Activated T-helper 1 cell treated with anti-CD3 and anti-CD28 coated beads, Interleukin-12 subunit alpha, Interleukin-12 subunit beta, Interleukin-2, Interleukin-4 antibody, amounts not matched to agents 30 ng/mL and 10 ng/mL and 1 ng/mL, durations not matched to agents 14 hours and 24 hours and 36 hours (primary cell): ENCODE measurements at regions of chr13 and their contacts with region 1.

Region 1: GRCh38 chr13:75326173-75327134 is 155.5 kb downstream of the TBC1D4 start:
- DNase-seq: peak; percentile 46
- H3K4me3 Mint-ChIP-seq: peak overlapping the region; percentile 83
- H3K27ac Mint-ChIP-seq: peak overlapping the region; percentile 96
- H3K4me1 Mint-ChIP-seq: peaks cover 48% of the 10 kb centered on the region
- H3K27me3 Mint-ChIP-seq: no peaks in the 10 kb centered on the region

Region 2: GRCh38 chr13:74243637-74244526 is 1082.6 kb before region 1 on chr13:
- intact Hi-C with region 1: loop called (anchors 5 kb)
- DNase-seq: no peak
- H3K4me3 Mint-ChIP-seq: peak overlapping the region; percentile 60
- H3K27ac Mint-ChIP-seq: peak overlapping the region; percentile 82
- H3K4me1 Mint-ChIP-seq: peaks cover 32% of the 10 kb centered on the region
- H3K27me3 Mint-ChIP-seq: peaks cover 2% of the 10 kb centered on the region

Region 3: DNA sequence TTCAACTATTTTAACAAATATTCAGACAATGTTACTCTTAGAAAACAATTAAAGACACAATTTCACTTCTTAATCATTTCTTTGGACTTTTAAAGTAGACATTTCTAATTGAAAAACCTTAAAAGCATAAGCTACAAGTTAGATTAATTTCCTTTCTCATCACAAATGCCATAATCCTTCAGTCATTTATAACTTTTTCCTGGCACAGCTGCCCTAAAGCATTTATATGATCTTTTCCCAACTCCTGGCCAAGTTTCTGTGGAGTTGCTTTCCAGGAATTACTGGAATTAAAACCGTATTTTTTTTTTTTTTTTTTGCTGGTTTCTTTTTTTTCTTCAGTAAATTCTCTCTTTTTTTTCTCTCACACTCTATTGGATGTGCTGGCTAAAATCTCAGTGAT is 460.4 kb before region 1 on chr13:
- intact Hi-C with region 1: no loop called
- DNase-seq: no peak
- H3K4me3 Mint-ChIP-seq: no peak overlapping the region
- H3K27ac Mint-ChIP-seq: no peak overlapping the region
- H3K4me1 Mint-ChIP-seq: no peaks in the 10 kb centered on the region
- H3K27me3 Mint-ChIP-seq: no peaks in the 10 kb centered on the region

Region 4: GRCh38 chr13:75299913-75300862 is 26.3 kb before region 1 on chr13:
- intact Hi-C with region 1: loop called (anchors 1 kb)
- DNase-seq: no peak
- H3K4me3 Mint-ChIP-seq: peak overlapping the region; percentile 47
- H3K27ac Mint-ChIP-seq: peak overlapping the region; percentile 79
- H3K4me1 Mint-ChIP-seq: peaks cover 47% of the 10 kb centered on the region
- H3K27me3 Mint-ChIP-seq: no peaks in the 10 kb centered on the region

Region 5: DNA sequence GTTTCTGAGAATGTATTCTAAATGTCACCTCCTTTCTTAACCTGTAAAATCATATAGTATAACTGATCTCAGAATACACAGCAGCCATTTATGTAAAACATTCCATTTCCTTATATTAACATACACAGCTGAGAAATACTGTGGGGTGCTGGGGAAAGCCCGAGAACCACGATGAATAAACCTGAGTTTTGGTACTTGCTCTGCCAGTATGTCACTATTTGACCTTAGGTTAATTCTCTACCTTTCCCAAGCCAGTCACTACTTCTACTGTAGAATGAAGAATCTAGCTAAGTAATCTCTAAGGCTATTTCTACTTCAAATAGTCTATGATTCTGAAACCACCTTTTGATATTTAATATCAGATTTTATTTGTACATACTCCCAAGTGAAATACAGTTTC is 18.2 kb before region 1 on chr13:
- intact Hi-C with region 1: loop called (anchors 1 kb)
- DNase-seq: no peak
- H3K4me3 Mint-ChIP-seq: peak overlapping the region; percentile 19
- H3K27ac Mint-ChIP-seq: peak overlapping the region; percentile 69
- H3K4me1 Mint-ChIP-seq: peaks cover 63% of the 10 kb centered on the region
- H3K27me3 Mint-ChIP-seq: no peaks in the 10 kb centered on the region

Region 6: GRCh38 chr13:75437582-75438318 is 111.3 kb after region 1 on chr13:
- intact Hi-C with region 1: no loop called
- DNase-seq: no peak
- H3K4me3 Mint-ChIP-seq: no peak overlapping the region
- H3K27ac Mint-ChIP-seq: no peak overlapping the region
- H3K4me1 Mint-ChIP-seq: no peaks in the 10 kb centered on the region
- H3K27me3 Mint-ChIP-seq: peaks cover 6% of the 10 kb centered on the region

Region 7: GRCh38 chr13:75482070-75482819 is 155.8 kb after region 1 on chr13 and contains the start of gene TBC1D4:
- intact Hi-C with region 1: loop called (anchors 2 kb)
- DNase-seq: peak; percentile 40
- H3K4me3 Mint-ChIP-seq: peak within 1 kb of the TSS; percentile 99
- H3K27ac Mint-ChIP-seq: peak within 1 kb of the TSS; percentile 89
- H3K4me1 Mint-ChIP-seq: peaks cover 45% of the 10 kb centered on the region
- H3K27me3 Mint-ChIP-seq: peaks cover 49% of the 10 kb centered on the region
- total RNA-seq, gene TBC1D4: 66.6 and 73.5 TPM in 2 replicates

Region 8: DNA sequence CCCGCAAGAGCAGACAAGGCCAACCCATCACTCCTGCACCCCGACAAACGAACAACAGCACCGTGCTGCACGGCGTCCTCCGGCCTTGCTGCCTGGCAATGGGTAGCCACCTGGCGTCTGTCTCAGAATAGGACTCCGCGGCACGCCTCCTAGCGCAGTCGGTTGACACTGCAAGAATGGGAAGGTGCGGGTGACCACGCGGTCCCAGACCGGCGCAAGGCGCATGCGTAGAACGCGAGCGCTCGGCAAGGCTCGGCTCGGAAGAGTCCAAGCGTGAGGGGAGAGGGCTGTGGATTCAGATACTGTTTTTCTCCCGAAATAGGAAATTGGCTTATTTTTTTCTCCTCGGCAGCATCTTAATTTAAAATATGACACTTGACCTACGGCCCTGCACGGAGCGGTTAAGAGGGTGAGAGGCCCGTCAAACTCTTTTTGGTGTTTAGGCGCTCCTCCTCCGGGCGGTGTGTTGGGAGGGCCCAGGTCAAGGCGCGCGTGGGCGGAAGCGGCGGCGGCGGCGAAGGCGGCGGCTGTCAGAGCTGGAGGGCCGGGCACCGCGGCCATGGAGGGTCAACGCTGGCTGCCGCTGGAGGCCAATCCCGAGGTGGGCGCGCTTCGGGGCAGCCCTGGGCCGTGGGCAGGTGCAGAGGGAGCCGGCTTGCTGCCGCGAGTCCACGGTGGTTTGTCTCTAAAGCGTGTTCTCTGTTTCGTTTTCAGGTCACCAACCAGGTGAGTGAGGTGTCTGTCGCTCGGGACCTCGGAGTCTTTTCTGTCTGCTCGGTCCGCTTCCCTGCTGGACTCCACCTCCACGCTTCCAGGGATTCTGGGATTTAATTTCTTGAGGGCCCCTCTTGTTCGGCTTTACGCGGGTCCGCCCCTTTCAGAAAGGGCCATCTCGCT is 223.1 kb after region 1 on chr13 and contains the start of gene UCHL3:
- intact Hi-C with region 1: loop called (anchors 2 kb)
- DNase-seq: peak; percentile 95
- H3K4me3 Mint-ChIP-seq: peak within 1 kb of the TSS; percentile 99
- H3K27ac Mint-ChIP-seq: peak within 1 kb of the TSS; percentile 98
- H3K4me1 Mint-ChIP-seq: peaks cover 39% of the 10 kb centered on the region
- H3K27me3 Mint-ChIP-seq: no peaks in the 10 kb centered on the region
- total RNA-seq, gene UCHL3: 38.9 and 46.6 TPM in 2 replicates

Region 9: DNA sequence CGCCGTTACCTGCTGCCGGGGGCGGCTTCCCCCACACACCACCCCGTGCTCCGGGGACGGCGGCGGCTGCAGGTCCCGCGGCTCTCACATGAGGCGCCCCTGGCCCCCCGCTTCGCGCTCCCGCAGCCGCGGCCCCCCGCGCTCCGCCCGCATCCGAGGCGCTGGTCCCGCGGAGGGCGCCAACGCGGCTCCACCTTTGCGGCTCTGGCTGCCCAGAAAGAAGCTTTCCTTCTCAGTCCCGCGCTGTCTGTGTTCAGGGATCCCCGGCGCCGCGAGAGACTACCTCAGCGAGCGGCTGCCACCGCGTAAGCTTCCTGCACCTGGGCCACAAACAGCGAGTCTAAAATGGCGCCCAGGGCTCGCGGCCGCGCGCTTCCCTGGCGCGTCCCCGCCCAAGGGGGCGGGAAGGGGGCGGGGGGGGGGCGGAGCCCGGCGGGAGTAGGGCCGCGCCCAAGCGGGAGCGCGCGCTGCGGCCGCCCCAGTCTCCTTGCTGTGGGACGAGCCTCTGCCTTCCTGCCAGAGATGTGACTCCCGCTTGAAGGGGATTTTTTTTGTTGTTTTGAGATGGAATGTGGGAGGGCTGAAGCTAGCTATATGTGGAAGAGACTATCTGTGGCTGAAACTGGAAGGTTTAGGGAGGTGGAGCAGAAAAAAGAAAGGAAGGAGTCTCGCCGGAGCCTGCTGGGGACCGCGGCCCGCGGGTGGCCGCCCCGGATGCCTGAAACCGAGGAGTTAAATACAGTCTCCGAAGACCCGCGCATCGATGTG is 1700.5 kb after region 1 on chr13 and contains the start of gene FBXL3:
- intact Hi-C with region 1: loop called (anchors 5 kb)
- DNase-seq: peak; percentile 78
- H3K4me3 Mint-ChIP-seq: peak within 1 kb of the TSS; percentile 94
- H3K27ac Mint-ChIP-seq: peak within 1 kb of the TSS; percentile 93
- H3K4me1 Mint-ChIP-seq: peaks cover 58% of the 10 kb centered on the region
- H3K27me3 Mint-ChIP-seq: no peaks in the 10 kb centered on the region
- total RNA-seq, gene FBXL3: 40.1 and 40.8 TPM in 2 replicates